ENCODE measurements at regions of chr11 and their contacts with region 1.

Region 1: GRCh38 chr11:61516675-61517572 is 8.4 kb downstream of the LRRC10B start:
- DNase-seq: no peak
- H3K4me3 ChIP-seq: no peak overlapping the region
- H3K27ac ChIP-seq: no peak overlapping the region
- H3K27me3 ChIP-seq: peaks cover 15% of the 10 kb centered on the region
- CTCF ChIP-seq: peak; percentile 97

Region 2: DNA sequence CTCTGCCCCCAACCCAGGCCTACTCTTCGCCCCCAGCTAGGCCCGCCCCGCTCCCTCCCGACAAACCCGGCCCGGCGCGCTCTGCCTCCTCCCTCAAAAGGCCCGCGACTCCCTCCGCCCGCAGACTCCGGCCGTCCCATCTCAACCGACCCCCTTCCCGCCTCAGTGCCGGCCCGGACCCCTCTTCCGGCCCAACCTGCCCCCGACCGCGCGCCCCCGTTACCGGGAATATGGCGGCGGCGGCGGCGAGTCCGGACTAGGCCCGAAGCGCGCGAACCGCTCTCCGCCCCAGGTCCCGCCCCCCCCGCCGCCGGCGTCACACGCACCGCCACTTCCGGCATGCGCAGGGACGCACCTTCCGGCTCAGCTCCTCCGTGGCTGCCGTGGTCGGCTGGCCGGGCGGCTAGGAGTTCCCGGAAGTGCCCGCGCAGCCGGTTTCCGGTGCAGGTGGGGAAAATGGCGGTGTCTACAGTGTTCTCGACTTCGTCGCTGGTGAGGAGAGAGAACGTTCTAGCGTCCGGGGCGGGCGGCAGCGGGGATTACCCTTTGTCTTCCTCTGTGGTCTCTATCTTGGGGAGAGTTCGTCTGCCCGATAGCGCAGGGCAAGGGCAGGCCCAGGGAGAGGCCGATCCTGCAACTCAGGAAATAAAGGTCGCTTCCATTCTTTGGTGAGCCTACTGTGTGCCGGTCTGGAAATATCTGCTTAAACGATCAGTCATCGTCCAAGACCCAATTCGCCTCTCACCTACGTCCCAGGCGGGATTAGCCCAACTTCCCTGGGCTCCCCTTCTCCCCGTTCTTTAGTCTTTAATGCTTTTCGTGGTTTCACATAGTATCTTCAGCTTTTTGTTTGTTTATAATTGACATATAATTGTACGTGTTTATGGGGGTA is 87.0 kb before region 1 on chr11 and contains the starts of genes CPSF7 and SDHAF2:
- CTCF ChIA-PET with region 1: interaction called, 17 read pairs
- POLR2A ChIA-PET with region 1: no interaction called
- DNase-seq: peak; percentile 77
- H3K4me3 ChIP-seq: peak within 1 kb of the TSS; percentile 100
- H3K27ac ChIP-seq: peak within 1 kb of the TSS; percentile 96
- H3K27me3 ChIP-seq: no peaks in the 10 kb centered on the region
- CTCF ChIP-seq: no peak
- polyA plus RNA-seq, gene CPSF7: 37.3 and 40.3 TPM in 2 replicates
- polyA plus RNA-seq, gene SDHAF2: 71.6 and 86.5 TPM in 2 replicates

Region 3: DNA sequence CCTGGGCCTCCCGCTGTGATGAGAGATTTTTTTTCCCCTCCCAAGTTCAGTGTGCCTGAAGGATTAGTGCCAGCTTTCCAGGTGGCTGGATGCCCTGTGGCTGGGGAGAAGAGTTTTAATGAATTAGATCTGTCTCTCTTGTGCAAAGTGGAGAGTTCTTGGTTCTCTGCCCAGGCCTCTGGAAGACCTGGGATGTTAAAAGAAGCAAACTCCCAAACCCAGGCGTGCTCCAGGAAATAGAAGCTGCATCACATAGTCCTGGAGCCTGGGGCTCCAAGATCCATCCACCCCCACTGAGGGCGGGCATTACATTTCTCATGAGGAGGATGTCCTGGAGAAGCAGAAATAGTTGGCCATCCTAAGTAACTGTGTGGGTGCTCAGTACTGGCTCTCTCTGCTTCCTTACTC is 56.4 kb before region 1 on chr11:
- CTCF ChIA-PET with region 1: interaction called, 10 read pairs
- POLR2A ChIA-PET with region 1: no interaction called
- DNase-seq: no peak
- H3K4me3 ChIP-seq: no peak overlapping the region
- H3K27ac ChIP-seq: no peak overlapping the region
- H3K27me3 ChIP-seq: no peaks in the 10 kb centered on the region
- CTCF ChIP-seq: no peak

Region 4: DNA sequence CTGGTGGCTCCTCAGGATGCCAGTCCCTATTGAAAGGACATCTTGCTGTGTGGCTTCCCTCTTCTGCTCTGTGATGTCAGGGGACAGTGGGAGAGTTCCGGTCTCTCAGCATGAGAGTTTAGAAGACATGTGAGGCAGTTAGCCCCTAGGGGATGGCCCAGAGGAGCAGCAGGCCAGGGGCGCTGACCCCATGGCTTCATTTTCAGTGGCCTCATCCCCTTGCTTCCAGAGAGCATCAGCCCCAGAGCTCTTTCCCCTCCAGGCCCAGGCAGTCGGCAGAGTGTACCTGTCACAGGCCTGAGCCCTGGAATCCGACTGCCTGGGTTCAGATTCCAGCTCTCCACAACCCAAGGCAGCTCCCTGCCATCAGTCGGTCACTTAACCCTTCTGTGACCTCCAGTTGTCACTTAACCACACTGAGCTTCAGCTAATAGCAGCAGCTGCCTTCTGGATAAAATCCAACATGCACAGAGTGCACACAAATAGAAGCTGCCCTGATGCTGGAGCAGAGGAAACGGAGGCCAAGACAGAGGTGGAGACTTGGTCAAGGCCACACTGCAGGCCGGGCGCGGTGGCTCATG is 22.5 kb before region 1 on chr11:
- CTCF ChIA-PET with region 1: interaction called, 37 read pairs
- POLR2A ChIA-PET with region 1: no interaction called
- DNase-seq: no peak
- H3K4me3 ChIP-seq: no peak overlapping the region
- H3K27ac ChIP-seq: no peak overlapping the region
- H3K27me3 ChIP-seq: peaks cover 2% of the 10 kb centered on the region
- CTCF ChIP-seq: no peak

Region 5: DNA sequence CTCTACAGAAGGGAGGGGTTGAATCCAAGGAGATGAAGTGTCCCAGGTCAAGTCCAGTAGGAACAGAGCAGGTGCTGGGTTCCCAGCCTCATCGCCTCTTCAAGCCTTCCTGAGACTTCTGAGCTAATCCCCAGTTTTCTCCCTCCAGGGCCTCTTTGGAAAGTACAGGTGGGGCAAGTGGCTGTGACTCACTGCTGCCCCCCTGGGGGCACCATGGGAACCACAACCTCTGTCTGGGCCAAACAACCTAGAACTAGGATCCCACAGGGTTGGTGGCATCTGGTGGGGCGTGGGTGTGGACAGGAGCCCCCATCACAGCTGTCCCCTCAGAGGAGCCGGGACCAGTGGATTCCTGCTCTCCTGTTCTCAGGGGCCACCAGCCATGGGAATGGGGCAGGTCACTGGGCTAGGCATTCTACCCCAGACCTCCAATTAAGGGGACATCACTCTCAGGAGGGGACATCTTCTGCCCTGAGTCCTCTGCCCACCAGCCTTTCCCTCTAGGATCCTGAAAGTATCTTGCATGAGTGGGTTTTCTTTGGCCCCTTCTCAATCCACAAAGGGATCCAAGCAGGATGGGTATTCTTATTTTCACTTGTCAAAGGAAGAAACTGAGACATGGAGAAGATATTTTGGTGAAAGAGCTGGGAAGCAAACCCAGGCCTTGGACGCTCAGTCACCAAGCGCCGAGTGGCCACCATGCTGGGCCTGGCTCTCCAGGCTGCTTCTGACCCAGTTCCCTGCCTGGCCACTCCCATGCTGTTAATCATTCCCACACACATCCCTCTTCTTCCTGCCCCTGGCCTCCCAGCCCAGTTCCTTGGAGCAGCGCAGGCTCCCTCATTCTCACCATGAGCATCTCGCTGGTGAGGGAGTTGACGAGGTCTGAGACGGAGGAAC is 15.5 kb after region 1 on chr11:
- CTCF ChIA-PET with region 1: interaction called, 13 read pairs
- POLR2A ChIA-PET with region 1: no interaction called
- DNase-seq: no peak
- H3K4me3 ChIP-seq: no peak overlapping the region
- H3K27ac ChIP-seq: no peak overlapping the region
- H3K27me3 ChIP-seq: peaks cover 80% of the 10 kb centered on the region
- CTCF ChIP-seq: peak; percentile 77

Region 6: DNA sequence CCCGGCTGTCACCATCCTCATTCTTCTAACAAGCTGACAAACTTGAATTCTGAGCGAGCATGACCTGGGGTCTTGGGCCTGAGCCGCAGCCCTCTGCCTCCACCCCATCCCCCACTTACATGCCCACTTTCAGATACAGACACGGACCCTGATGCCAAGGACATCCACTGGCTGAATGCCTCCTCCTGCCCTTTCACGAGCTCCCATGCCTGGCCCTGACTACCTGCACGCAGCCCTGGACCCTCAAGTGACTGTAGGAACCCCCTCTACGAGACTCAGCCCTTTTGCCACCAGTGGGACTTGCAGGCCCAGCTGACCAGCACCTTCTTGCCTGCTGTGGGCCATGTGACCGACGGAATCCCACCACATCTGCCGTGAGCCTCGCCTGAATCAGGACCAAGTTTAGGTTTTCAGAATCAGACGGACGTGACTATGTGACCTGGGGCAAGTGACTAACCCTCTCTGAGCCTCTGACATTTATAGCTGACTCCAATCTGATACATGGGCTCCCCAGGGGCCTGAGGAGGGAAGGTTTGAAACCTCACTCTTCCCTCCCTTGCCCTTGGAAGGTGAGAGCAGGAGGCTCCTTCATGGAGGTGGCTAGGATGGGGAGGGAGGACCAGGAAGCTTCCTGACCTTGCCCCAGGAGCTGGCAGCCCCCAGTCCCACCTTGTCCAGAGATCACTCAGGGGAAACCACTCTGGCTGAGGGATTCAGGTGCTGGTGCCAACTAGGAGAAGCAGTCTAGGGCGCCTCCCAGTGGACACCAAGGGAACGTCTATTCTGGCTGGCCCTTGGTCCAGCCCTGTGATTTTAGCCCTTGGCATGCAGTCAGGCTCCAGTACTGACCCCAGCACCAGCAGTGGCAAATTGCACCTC is 110.9 kb after region 1 on chr11:
- CTCF ChIA-PET with region 1: interaction called, 12 read pairs
- POLR2A ChIA-PET with region 1: no interaction called
- DNase-seq: peak; percentile 50
- H3K4me3 ChIP-seq: no peak overlapping the region
- H3K27ac ChIP-seq: no peak overlapping the region
- H3K27me3 ChIP-seq: peaks cover 12% of the 10 kb centered on the region
- CTCF ChIP-seq: peak; percentile 93

Region 7: GRCh38 chr11:62449451-62449851 is 932.5 kb after region 1 on chr11:
- CTCF ChIA-PET with region 1: no interaction called
- POLR2A ChIA-PET with region 1: no interaction called
- DNase-seq: no peak
- H3K4me3 ChIP-seq: no peak overlapping the region
- H3K27ac ChIP-seq: no peak overlapping the region
- H3K27me3 ChIP-seq: no peaks in the 10 kb centered on the region
- CTCF ChIP-seq: no peak